H1 (cell line): ENCODE measurements at regions of chr6 and their contacts with region 1.

Region 1: GRCh38 chr6:29834564-29835436 is 7.2 kb downstream of the HLA-G start:
- DNase-seq: peak in 1 of 2 experiments; percentile 94
- H3K4me3 ChIP-seq: no peak overlapping the region
- H3K27ac ChIP-seq: no peak overlapping the region
- H3K4me1 ChIP-seq: no peaks in the 10 kb centered on the region
- H3K27me3 ChIP-seq: peaks cover 0 to 5% (median under 1%) of the 10 kb centered on the region in 4 experiments; a peak in 3 of 7 replicates
- CTCF ChIP-seq: peak; percentile 77 to 94 (median 82)
- EP300 ChIP-seq: no peak
- POLR2A ChIP-seq: no peak
- RAD21 ChIP-seq: peak; percentile 95 to 98

Region 2: GRCh38 chr6:29696155-29697125 is 138.4 kb before region 1 on chr6:
- CTCF ChIA-PET with region 1: interaction called, 17 read pairs
- POLR2A ChIA-PET with region 1: no interaction called
- DNase-seq: peak in 1 of 2 experiments; percentile 66
- H3K4me3 ChIP-seq: no peak overlapping the region
- H3K27ac ChIP-seq: no peak overlapping the region
- H3K4me1 ChIP-seq: peaks cover 0 to 3% (median 2%) of the 10 kb centered on the region in 4 experiments; a peak in 5 of 7 replicates
- H3K27me3 ChIP-seq: no peaks in the 10 kb centered on the region
- CTCF ChIP-seq: peak; percentile 66 to 80 (median 80)
- EP300 ChIP-seq: no peak
- POLR2A ChIP-seq: no peak
- RAD21 ChIP-seq: peak; percentile 45 to 69

Region 3: DNA sequence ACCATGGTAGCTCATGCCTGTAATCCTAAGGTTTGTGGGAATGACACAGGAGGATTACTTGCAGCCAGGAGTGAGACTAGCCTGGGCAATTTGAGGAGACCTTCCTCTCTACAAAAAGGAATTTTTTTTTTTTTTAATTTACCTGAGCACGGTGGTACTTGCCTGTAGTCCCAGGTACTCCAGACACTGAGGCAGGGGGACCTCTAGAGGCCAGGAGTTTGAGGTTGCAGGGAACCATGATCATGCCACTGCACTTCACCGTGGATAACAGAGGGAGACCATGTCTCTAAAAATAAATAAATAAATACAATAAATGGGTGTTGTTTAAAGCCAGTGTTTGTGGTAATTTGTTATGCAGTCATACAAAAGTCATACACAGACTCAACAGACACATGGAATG is 113.9 kb before region 1 on chr6:
- CTCF ChIA-PET with region 1: interaction called, 18 read pairs
- POLR2A ChIA-PET with region 1: no interaction called
- DNase-seq: no peak
- H3K4me3 ChIP-seq: no peak overlapping the region
- H3K27ac ChIP-seq: no peak overlapping the region
- H3K4me1 ChIP-seq: peaks cover 0 to 6% (median under 1%) of the 10 kb centered on the region in 4 experiments; a peak in 3 of 7 replicates
- H3K27me3 ChIP-seq: peaks cover 10 to 34% (median 30%) of the 10 kb centered on the region in 4 experiments
- CTCF ChIP-seq: peak; percentile 42 to 54 (median 50)
- EP300 ChIP-seq: no peak
- POLR2A ChIP-seq: no peak
- RAD21 ChIP-seq: peak; percentile 39 to 54; a peak in 3 of 4 replicates

Region 4: GRCh38 chr6:29737707-29738630 is 96.8 kb before region 1 on chr6:
- CTCF ChIA-PET with region 1: interaction called, 100 read pairs
- POLR2A ChIA-PET with region 1: interaction called, 9 read pairs
- DNase-seq: peak in 1 of 2 experiments; percentile 84
- H3K4me3 ChIP-seq: no peak overlapping the region
- H3K27ac ChIP-seq: no peak overlapping the region
- H3K4me1 ChIP-seq: peaks cover 0 to 4% (median 0%) of the 10 kb centered on the region in 4 experiments; a peak in 2 of 7 replicates
- H3K27me3 ChIP-seq: no peaks in the 10 kb centered on the region
- CTCF ChIP-seq: peak; percentile 80 to 96 (median 94)
- EP300 ChIP-seq: no peak
- POLR2A ChIP-seq: no peak
- RAD21 ChIP-seq: peak; percentile 99

Region 5: GRCh38 chr6:29752451-29753308 is 82.1 kb before region 1 on chr6:
- CTCF ChIA-PET with region 1: interaction called, 20 read pairs
- POLR2A ChIA-PET with region 1: interaction called, 5 read pairs
- DNase-seq: peak; percentile 82 to 91
- H3K4me3 ChIP-seq: peak overlapping the region; percentile 37 to 78 (median 69)
- H3K27ac ChIP-seq: no peak overlapping the region
- H3K4me1 ChIP-seq: peaks cover 6 to 19% (median 10%) of the 10 kb centered on the region in 4 experiments; a peak in 6 of 7 replicates
- H3K27me3 ChIP-seq: peaks cover 8 to 48% (median 38%) of the 10 kb centered on the region in 4 experiments
- CTCF ChIP-seq: peak; percentile 97 to 100 (median 99)
- EP300 ChIP-seq: peak in 1 of 2 experiments; percentile 60; a peak in 1 of 3 replicates
- POLR2A ChIP-seq: peak in 1 of 2 experiments; percentile 80; a peak in 2 of 3 replicates
- RAD21 ChIP-seq: peak; percentile 71 to 82

Region 6: DNA sequence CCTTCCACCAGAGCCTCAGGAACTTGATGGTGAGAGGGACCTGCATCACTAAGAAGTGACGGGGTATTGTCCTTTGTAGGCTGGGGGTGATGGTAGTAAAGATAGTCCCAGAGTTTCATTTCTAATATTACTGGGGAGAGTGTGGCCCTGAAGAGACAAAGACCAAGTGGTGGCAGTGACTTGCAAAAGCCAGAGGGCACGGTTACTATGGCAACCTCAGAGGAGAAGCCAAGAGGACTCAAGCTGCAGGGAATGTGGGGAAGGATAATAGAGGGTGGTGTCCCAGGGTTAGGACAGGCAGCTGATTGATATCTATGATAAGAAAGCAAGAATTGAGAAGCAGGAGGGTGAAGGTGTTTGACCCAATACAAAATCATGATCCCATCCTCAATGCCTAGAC is 35.3 kb after region 1 on chr6:
- CTCF ChIA-PET with region 1: no interaction called
- POLR2A ChIA-PET with region 1: no interaction called
- DNase-seq: no peak
- H3K4me3 ChIP-seq: no peak overlapping the region
- H3K27ac ChIP-seq: no peak overlapping the region
- H3K4me1 ChIP-seq: no peaks in the 10 kb centered on the region
- H3K27me3 ChIP-seq: peaks cover 0 to 2% (median 0%) of the 10 kb centered on the region in 4 experiments; a peak in 2 of 7 replicates
- CTCF ChIP-seq: no peak
- EP300 ChIP-seq: no peak
- POLR2A ChIP-seq: no peak
- RAD21 ChIP-seq: no peak